ENCODE measurements at regions of chr7 and their contacts with region 1.

Region 1: GRCh38 chr7:104231054-104232046 is 23.5 kb upstream of the ORC5 start:
- DNase-seq: peak; percentile 8 to 16
- ATAC-seq: peak; percentile 42 to 64
- H3K4me3 ChIP-seq: no peak overlapping the region
- H3K27ac ChIP-seq: no peak overlapping the region
- H3K4me1 ChIP-seq: peaks cover 0 to 4% of the 10 kb centered on the region in 2 donors
- H3K27me3 ChIP-seq: no peaks in the 10 kb centered on the region
- CTCF ChIP-seq: peak; percentile 36 to 77 (median 60)
- POLR2A ChIP-seq: no peak

Region 2: DNA sequence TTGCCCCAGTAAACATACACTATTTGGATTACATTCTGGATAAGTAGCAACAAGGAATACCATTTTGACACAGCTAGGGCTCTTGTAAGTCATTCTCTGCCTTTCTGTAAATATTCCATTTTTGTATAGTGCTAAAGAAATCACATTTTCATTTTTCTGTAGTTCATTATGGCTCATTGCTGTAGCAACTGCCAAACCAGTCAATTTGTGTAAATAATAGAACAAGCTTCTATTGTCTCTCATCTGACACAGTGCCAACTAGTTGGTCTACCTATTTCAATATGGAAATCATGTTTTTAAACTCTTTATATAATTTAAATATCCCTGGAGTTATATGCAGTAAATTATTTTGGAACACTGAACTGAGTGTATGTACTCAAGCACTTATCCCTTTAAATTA is 435.6 kb before region 1 on chr7:
- in situ Hi-C with region 1: no loop called
- intact Hi-C with region 1: no loop called
- DNase-seq: no peak
- ATAC-seq: no peak
- H3K4me3 ChIP-seq: no peak overlapping the region
- H3K27ac ChIP-seq: no peak overlapping the region
- H3K4me1 ChIP-seq: no peaks in the 10 kb centered on the region
- H3K27me3 ChIP-seq: no peaks in the 10 kb centered on the region
- CTCF ChIP-seq: no peak
- POLR2A ChIP-seq: no peak

Region 3: GRCh38 chr7:104848138-104848990 is 617.0 kb after region 1 on chr7:
- in situ Hi-C with region 1: loop called in 3 of 4 experiments (anchors 10 to 25 kb)
- intact Hi-C with region 1: loop called (anchors 2 kb)
- DNase-seq: no peak
- ATAC-seq: peak in 1 of 2 donors; percentile 77
- H3K4me3 ChIP-seq: no peak overlapping the region
- H3K27ac ChIP-seq: no peak overlapping the region
- H3K4me1 ChIP-seq: no peaks in the 10 kb centered on the region
- H3K27me3 ChIP-seq: peaks cover 0 to 6% (median 3%) of the 10 kb centered on the region in 3 donors
- CTCF ChIP-seq: peak; percentile 50 to 77 (median 64)
- POLR2A ChIP-seq: no peak

Region 4: GRCh38 chr7:104914421-104914820 is 683.1 kb after region 1 on chr7:
- in situ Hi-C with region 1: loop called in 2 of 4 experiments (anchors 10 to 25 kb)
- intact Hi-C with region 1: loop called (anchors 5 kb)
- DNase-seq: no peak
- ATAC-seq: no peak
- H3K4me3 ChIP-seq: no peak overlapping the region
- H3K27ac ChIP-seq: no peak overlapping the region
- H3K4me1 ChIP-seq: no peaks in the 10 kb centered on the region
- H3K27me3 ChIP-seq: no peaks in the 10 kb centered on the region
- CTCF ChIP-seq: no peak
- POLR2A ChIP-seq: no peak

Region 5: GRCh38 chr7:104923010-104923421 is 691.7 kb after region 1 on chr7:
- in situ Hi-C with region 1: loop called in 2 of 4 experiments (anchors 10 to 25 kb)
- intact Hi-C with region 1: loop called (anchors 5 kb)
- DNase-seq: peak; percentile 34 to 47
- ATAC-seq: peak; percentile 65 to 68
- H3K4me3 ChIP-seq: no peak overlapping the region
- H3K27ac ChIP-seq: peak overlapping the region in 3 of 4 donors; percentile 14 to 48 (median 44)
- H3K4me1 ChIP-seq: peaks cover 0 to 3% of the 10 kb centered on the region in 2 donors
- H3K27me3 ChIP-seq: no peaks in the 10 kb centered on the region
- CTCF ChIP-seq: peak; percentile 40 to 68 (median 57)
- POLR2A ChIP-seq: no peak